ENCODE measurements at regions of chr1 and their contacts with region 1.

Region 1: GRCh38 chr1:216723274-216723780 is at the start of gene ESRRG:
- DNase-seq: peak; percentile 56 to 70
- ATAC-seq: peak; percentile 80 to 92 (median 91)
- H3K4me3 ChIP-seq: peak within 1 kb of the TSS; percentile 66
- H3K27ac ChIP-seq: peak within 1 kb of the TSS; percentile 68
- H3K4me1 ChIP-seq: no peaks in the 10 kb centered on the region
- H3K27me3 ChIP-seq: no peaks in the 10 kb centered on the region
- CTCF ChIP-seq: no peak
- total RNA-seq, gene ESRRG: 5.3 to 34.4 (median 19.9) TPM

Region 2: GRCh38 chr1:216600730-216601609 is 122.4 kb before region 1 on chr1:
- intact Hi-C with region 1: loop called in 1 of 2 experiments (anchors 5 kb)
- DNase-seq: peak; percentile 77 to 87
- ATAC-seq: peak; percentile 89 to 95 (median 94)
- H3K4me3 ChIP-seq: peak overlapping the region; percentile 82
- H3K27ac ChIP-seq: peak overlapping the region; percentile 91
- H3K4me1 ChIP-seq: peaks cover 11% of the 10 kb centered on the region
- H3K27me3 ChIP-seq: no peaks in the 10 kb centered on the region
- CTCF ChIP-seq: peak; percentile 51

Measured in psoas muscle (tissue), 8 donors.